Left cardiac atrium (tissue), 4 donors: ENCODE measurements at regions of chr2 and their contacts with region 1.

Region 1: GRCh38 chr2:86298411-86299379 is 38.7 kb downstream of the REEP1 start:
- DNase-seq: no peak
- ATAC-seq: peak; percentile 21 to 72

Region 2: DNA sequence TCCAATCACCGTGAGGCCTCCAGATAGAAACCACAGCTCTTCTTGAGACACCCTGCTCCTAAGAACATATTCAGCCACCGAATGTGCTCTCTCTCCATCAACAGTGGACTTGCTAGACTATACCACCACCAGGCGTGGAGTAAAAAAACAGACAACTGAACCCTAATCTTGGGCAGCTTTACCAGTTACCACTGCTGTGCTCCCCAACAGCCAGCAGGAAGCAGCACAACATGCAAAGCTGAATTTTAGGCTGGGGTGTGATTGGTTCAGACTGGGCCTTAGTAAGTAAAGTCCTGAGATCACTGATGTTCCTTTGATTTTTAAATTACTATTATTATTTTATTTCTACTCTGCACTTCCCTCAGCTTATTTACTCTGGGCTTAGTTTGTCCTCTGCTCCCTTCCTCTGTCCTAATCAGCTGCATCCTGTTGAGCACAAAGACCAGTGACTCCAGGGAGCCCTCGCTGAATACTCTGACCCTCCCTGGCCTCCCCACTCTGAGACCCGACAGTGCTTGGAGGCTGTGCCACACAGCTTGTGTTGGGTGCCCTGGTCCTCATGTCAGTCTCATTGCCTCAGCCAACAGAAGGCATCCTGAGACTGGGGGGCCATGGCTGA is 77.5 kb before region 1 on chr2:
- intact Hi-C with region 1: loop called in 1 of 2 experiments (anchors 5 kb)
- DNase-seq: peak; percentile 53
- ATAC-seq: no peak

Region 3: GRCh38 chr2:86337244-86337836 is 38.6 kb after region 1 on chr2 and contains the start of gene REEP1:
- intact Hi-C with region 1: loop called in 1 of 2 experiments (anchors 5 kb)
- DNase-seq: peak; percentile 31
- ATAC-seq: peak; percentile 86 to 88
- total RNA-seq, gene REEP1: 15.7 to 22.5 TPM

Region 4: GRCh38 chr2:86368161-86368824 is 69.6 kb after region 1 on chr2:
- intact Hi-C with region 1: loop called (anchors 5 to 10 kb)
- DNase-seq: peak; percentile 27
- ATAC-seq: peak; percentile 65 to 69

Region 5: GRCh38 chr2:86396291-86396785 is 97.6 kb after region 1 on chr2:
- intact Hi-C with region 1: no loop called
- DNase-seq: no peak
- ATAC-seq: peak in 1 of 2 donors; percentile 39